Left cardiac atrium (tissue), 4 donors: ENCODE measurements at regions of chr6 and their contacts with region 1.

Region 1: GRCh38 chr6:72084992-72085569 is 198.7 kb downstream of the RIMS1 start:
- DNase-seq: no peak
- ATAC-seq: no peak

Region 2: GRCh38 chr6:71375676-71376075 is 709.4 kb before region 1 on chr6:
- intact Hi-C with region 1: loop called in 1 of 2 experiments (anchors 10 kb)
- DNase-seq: no peak
- ATAC-seq: no peak

Region 3: DNA sequence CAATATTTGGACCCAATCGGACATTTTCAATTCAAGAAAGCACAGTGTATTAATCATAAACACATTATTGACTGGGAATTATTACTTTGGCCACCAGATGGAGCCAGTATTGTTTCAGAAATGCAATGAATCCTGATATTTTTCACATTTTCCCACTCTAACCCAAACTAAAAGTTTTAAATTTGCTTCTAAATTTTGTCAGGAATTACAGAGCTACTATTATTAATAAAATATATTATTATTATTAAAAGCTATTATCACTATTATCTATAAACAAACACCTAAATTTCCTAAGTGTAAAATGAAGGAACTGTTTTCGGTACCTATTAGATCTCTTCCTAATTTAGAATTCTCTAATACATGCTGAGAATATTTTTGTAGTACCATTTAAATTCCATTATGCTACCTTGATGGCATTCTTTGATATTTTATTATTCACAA is 551.1 kb before region 1 on chr6:
- intact Hi-C with region 1: loop called (anchors 2 to 10 kb)
- DNase-seq: no peak
- ATAC-seq: no peak

Region 4: DNA sequence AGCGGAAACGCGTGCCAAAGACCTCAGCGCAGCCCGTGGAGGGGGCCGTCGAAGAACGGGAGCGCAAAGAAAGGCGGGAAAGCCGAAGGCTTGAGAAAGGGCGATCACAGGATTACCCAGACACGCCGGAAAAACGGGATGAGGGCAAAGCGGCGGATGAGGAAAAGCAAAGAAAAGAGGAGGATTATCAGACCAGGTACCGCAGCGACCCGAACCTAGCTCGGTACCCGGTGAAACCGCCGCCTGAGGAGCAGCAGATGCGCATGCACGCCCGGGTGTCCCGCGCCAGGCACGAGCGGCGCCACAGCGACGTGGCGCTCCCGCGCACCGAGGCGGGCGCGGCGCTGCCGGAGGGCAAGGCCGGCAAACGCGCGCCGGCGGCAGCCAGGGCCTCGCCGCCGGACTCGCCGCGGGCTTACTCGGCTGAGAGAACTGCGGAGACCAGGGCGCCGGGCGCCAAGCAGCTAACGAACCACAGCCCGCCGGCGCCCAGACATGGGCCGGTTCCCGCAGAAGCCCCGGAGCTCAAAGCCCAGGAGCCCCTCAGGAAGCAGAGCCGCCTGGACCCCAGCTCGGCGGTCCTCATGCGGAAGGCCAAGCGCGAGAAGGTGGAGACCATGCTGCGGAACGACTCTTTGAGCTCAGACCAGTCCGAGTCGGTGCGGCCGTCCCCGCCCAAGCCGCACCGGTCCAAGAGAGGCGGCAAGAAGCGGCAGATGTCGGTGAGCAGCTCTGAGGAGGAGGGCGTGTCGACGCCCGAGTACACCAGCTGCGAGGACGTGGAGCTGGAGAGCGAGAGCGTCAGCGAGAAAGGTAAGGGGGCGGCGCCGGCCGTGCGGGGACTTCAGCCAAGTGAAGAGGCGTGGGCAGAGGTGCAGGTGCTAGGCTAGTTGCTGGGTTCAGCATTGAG is 97.5 kb after region 1 on chr6:
- intact Hi-C with region 1: no loop called
- DNase-seq: peak; percentile 22
- ATAC-seq: peak; percentile 71 to 95